PC-3 (cell line): ENCODE measurements at regions of chr3 and their contacts with region 1.

Region 1: DNA sequence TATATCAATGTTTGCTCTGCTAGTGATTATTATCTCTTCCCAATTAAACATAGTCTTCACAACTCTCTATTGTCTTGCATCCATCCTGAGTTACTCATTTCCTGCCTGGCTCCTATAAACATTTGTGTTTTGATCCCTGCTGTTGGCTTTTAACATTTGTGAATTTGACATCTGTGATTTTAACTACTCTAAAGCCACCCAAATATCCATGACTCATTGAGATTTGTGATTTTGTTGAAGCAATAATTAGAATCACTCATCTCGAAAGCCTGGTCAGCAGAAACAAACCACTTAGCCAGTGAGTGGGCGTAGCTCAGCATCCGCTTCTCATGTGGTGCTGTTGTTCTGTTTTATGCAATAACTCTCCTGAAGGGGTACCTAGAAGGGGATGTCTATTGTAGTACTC is 174.3 kb upstream of the ZBTB20 start:
- DNase-seq: peak; percentile 6
- ATAC-seq: peak; percentile 66
- H3K4me3 ChIP-seq: no peak overlapping the region
- H3K27ac ChIP-seq: no peak overlapping the region
- H3K4me1 ChIP-seq: peaks cover 5% of the 10 kb centered on the region; the same call in 1 of the 2 replicates
- H3K27me3 ChIP-seq: no peaks in the 10 kb centered on the region
- CTCF ChIP-seq: no peak

Region 2: GRCh38 chr3:115233021-115233420 is 88.4 kb before region 1 on chr3:
- CTCF ChIA-PET with region 1: no interaction called
- POLR2A ChIA-PET with region 1: no interaction called
- intact Hi-C with region 1: loop called (anchors 5 kb)
- DNase-seq: peak; percentile 55
- ATAC-seq: peak; percentile 64
- H3K4me3 ChIP-seq: no peak overlapping the region
- H3K27ac ChIP-seq: peak overlapping the region; percentile 80
- H3K4me1 ChIP-seq: peaks cover 15% of the 10 kb centered on the region
- H3K27me3 ChIP-seq: no peaks in the 10 kb centered on the region
- CTCF ChIP-seq: no peak

Region 3: DNA sequence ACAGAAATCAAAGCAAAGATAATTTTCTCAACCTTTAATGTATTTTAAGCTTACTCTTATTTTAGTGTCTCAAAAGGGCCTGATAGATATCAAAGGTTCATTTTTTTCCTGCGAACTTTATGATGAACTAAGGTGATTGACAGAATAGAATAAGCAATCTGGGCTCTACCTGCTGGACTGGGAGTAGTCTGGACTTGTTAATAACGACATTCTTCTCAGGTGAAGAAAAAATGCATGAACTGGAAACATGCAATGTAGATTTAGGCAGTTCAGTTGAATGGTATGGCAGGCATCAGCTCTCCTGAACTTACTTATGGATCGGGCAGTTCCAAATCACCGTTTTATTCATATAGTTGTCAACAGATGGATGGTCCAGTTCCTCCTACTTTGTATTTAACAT is 15.4 kb after region 1 on chr3:
- CTCF ChIA-PET with region 1: no interaction called
- POLR2A ChIA-PET with region 1: no interaction called
- intact Hi-C with region 1: no loop called
- DNase-seq: no peak
- ATAC-seq: no peak
- H3K4me3 ChIP-seq: no peak overlapping the region
- H3K27ac ChIP-seq: no peak overlapping the region
- H3K4me1 ChIP-seq: peaks cover 8% of the 10 kb centered on the region
- H3K27me3 ChIP-seq: no peaks in the 10 kb centered on the region
- CTCF ChIP-seq: no peak